WTC11 (cell line): ENCODE measurements at regions of chr7 and their contacts with region 1.

Region 1: GRCh38 chr7:38335492-38336147 is 62.2 kb upstream of the TARP start:
- DNase-seq: peak; percentile 94
- ATAC-seq: peak; percentile 78
- H3K4me3 Mint-ChIP-seq: no peak overlapping the region
- H3K27ac Mint-ChIP-seq: no peak overlapping the region
- H3K4me1 Mint-ChIP-seq: peaks cover 34% of the 10 kb centered on the region
- H3K27me3 Mint-ChIP-seq: no peaks in the 10 kb centered on the region
- CTCF ChIP-seq: peak; percentile 70

Region 2: DNA sequence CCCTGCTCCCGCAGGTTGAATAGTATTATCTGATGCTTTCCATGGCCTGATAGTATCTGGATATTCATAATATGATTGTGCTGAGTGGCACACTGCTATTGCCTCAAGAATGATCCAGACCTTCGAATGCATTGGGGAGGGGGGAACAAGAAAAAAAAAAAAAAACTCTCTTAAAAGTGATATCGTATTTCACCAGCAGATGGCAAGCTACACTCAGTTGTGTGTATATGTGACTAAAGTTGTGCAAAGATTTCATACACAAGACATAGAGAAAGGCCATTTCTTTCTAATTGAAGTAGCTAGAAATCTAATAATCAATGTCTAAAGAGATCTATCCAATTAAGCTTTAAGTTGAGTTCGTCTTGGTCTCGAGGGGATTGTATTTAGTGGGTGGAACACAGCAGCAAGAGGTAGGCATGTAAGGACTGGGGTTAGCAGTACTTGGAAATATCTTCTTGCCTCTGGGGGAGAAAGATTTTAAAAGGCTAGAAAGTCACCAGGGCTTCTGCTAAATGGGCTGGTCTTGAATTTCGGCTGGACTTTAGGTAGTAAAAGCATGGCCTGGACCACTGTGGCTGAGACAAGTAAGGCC is 434.3 kb before region 1 on chr7:
- CTCF ChIA-PET with region 1: interaction called, 14 read pairs
- POLR2A ChIA-PET with region 1: no interaction called
- DNase-seq: no peak
- ATAC-seq: peak; percentile 82
- H3K4me3 Mint-ChIP-seq: no peak overlapping the region
- H3K27ac Mint-ChIP-seq: no peak overlapping the region
- H3K4me1 Mint-ChIP-seq: peaks cover 2% of the 10 kb centered on the region
- H3K27me3 Mint-ChIP-seq: no peaks in the 10 kb centered on the region
- CTCF ChIP-seq: no peak; the same call in 1 of the 2 replicates

Region 3: GRCh38 chr7:38107486-38107893 is 228.1 kb before region 1 on chr7:
- CTCF ChIA-PET with region 1: interaction called, 21 read pairs
- POLR2A ChIA-PET with region 1: no interaction called
- DNase-seq: peak; percentile 81
- ATAC-seq: peak; percentile 94
- H3K4me3 Mint-ChIP-seq: no peak overlapping the region
- H3K27ac Mint-ChIP-seq: no peak overlapping the region
- H3K4me1 Mint-ChIP-seq: 0 out of 2 replicates have a peak, but pooled peaks cover 7% of the 10 kb centered on the region
- H3K27me3 Mint-ChIP-seq: no peaks in the 10 kb centered on the region
- CTCF ChIP-seq: peak; percentile 74

Region 4: DNA sequence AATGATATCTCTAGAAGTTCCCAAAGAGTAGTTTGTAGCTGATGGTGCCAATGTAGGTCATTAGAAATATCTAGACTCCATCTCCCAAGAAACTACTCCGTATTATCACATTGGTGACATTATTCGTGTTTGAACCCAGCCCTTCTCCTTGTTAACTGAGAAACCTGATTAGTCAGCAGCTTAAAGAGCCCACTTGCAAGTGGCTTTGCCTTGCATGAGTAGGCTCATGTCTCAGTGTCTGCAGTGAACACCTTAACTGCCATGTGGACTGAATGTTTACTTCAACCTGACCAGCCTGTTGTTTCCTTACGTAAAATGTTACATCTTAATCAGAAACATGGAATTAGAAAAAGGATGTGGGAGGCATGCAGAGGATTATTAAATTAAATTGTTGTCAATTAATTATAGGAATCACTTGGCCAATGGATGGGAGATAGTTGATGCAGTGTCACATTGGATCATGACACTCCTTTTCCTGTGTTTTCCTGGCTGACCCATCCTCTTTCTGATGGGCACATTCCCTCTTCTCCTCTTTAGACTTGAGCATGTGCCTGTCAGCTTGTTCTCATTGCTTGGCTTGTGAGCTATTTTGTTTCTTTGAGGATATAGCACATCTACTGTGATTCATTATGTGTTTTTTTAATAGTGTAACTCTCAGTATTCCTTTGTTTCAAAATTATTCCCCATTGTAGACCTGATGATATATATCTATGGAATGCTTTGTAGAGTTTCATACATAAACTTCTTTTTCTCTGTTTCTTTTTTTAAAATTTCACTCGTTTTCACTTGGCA is 139.6 kb before region 1 on chr7:
- CTCF ChIA-PET with region 1: interaction called, 14 read pairs
- POLR2A ChIA-PET with region 1: no interaction called
- DNase-seq: no peak
- ATAC-seq: no peak
- H3K4me3 Mint-ChIP-seq: no peak overlapping the region
- H3K27ac Mint-ChIP-seq: no peak overlapping the region
- H3K4me1 Mint-ChIP-seq: peaks cover 40% of the 10 kb centered on the region
- H3K27me3 Mint-ChIP-seq: no peaks in the 10 kb centered on the region
- CTCF ChIP-seq: no peak

Region 5: DNA sequence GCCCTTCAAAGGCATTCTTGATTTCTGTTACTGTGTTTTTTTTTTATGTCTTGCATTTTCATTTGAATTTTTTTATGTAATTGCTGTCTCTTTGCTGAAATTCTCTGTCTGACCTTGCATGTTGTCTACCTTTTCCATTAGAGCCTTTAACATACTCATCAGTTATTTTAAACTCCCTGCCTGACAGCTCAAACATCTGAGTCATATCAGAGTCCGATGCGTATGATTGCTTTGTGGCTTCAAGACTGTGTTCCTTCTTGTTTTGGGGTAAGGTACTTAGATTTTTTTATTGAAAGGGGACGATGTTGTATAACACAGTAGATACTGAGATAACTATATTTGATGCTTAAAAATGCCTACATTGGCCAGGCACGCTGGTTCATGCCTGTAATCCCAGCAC is 52.5 kb before region 1 on chr7:
- CTCF ChIA-PET with region 1: interaction called, 15 read pairs
- POLR2A ChIA-PET with region 1: no interaction called
- DNase-seq: no peak
- ATAC-seq: no peak
- H3K4me3 Mint-ChIP-seq: no peak overlapping the region
- H3K27ac Mint-ChIP-seq: no peak overlapping the region
- H3K4me1 Mint-ChIP-seq: peaks cover 11% of the 10 kb centered on the region
- H3K27me3 Mint-ChIP-seq: no peaks in the 10 kb centered on the region; the same call in 1 of the 2 replicates
- CTCF ChIP-seq: no peak

Region 6: GRCh38 chr7:38369816-38370493 is 34.3 kb after region 1 on chr7:
- CTCF ChIA-PET with region 1: interaction called, 78 read pairs
- POLR2A ChIA-PET with region 1: no interaction called
- DNase-seq: peak; percentile 97
- ATAC-seq: peak; percentile 92
- H3K4me3 Mint-ChIP-seq: peak overlapping the region; percentile 10; the same call in 1 of the 2 replicates
- H3K27ac Mint-ChIP-seq: peak overlapping the region; percentile 24
- H3K4me1 Mint-ChIP-seq: peaks cover 17% of the 10 kb centered on the region
- H3K27me3 Mint-ChIP-seq: no peaks in the 10 kb centered on the region
- CTCF ChIP-seq: peak; percentile 77